ENCODE measurements at regions of chr5 and their contacts with region 1.

Region 1: DNA sequence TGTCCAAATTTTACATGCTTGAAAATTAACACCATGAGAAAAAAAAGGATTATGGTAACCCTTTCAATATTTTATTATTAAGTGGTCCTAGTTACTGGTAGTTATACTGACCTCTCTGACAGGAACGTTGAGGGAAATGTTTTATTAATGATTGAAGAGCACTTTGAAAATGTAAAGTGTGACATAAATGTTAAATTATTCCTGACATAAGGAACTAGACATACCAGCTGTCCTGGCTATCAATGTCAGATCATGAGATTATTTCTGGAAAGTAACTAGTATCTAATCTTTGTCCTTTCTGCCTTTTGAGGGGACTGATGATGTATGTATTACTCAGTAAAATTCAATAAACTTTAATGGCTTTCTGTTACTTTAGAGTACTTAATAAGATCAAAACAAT is 1538.5 kb upstream of the CDH6 start:
- DNase-seq: no peak

Region 2: GRCh38 chr5:29894668-29895067 is 239.7 kb after region 1 on chr5:
- intact Hi-C with region 1: loop called in 1 of 2 experiments (anchors 5 kb)
- DNase-seq: no peak

Measured in posterior vena cava (tissue), 2 donors.